ENCODE measurements at regions of chr4 and their contacts with region 1.

Region 1: DNA sequence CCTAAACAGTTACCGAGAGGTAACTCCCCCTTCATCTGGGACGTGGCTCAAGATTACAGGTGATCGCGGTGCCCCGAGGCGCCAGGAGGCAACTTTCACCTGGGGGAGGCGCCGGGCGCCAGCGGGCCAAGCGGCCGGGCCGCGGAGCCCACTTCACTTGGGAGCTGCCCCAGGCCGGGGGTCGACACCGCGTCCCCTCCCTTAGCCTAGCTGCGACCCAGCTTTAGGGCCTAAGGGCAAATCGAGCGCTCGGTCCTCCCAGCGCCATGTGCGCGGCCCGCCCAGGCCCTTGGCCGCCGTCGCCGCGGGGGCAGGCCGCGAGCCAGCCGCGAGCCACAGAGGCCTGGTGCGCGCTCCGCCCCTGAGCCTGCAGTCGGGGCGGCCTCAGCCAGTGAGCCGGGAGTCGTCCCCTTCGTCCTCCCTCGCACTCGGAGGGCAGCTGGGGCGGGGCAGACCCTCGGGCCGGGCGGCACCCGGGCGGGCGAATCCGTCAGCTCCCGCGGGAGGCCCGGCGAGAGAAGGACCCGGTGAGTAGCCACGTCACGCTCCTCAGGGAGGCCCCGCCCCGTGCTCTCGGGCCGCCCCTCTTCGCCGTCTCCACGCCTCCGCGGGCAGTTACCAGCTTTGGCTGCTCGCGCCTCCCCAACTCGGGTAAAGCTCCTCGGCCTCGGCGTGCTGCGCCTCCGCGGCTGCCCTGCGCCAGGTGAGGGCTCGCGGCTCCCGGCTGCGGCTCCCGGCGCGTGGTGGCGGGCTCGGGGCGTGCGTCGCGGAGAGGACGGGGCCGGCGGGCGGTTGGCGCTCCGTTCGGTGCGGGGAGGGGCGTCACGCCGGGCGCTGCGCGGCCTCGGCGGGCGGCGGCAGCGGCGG is at the start of gene LARP1B:
- DNase-seq: peak; percentile 95 to 98 (median 97)
- H3K4me3 ChIP-seq: peak within 1 kb of the TSS; percentile 58 to 94 (median 78)
- H3K27ac ChIP-seq: peak within 1 kb of the TSS; percentile 89 to 97
- H3K4me1 ChIP-seq: peaks cover 0 to 18% (median 8%) of the 10 kb centered on the region in 4 experiments
- H3K27me3 ChIP-seq: no peaks in the 10 kb centered on the region

Region 2: GRCh38 chr4:127965062-127965802 is 95.7 kb before region 1 on chr4 and contains the starts of genes ABHD18 and MFSD8:
- CTCF ChIA-PET with region 1: interaction called, 3 read pairs
- POLR2A ChIA-PET with region 1: interaction called, 22 read pairs
- DNase-seq: peak; percentile 99 to 100 (median 100)
- H3K4me3 ChIP-seq: peak within 1 kb of the TSS; percentile 77 to 100 (median 97)
- H3K27ac ChIP-seq: peak within 1 kb of the TSS; percentile 92 to 93
- H3K4me1 ChIP-seq: peaks cover 4 to 19% (median 7%) of the 10 kb centered on the region in 4 experiments
- H3K27me3 ChIP-seq: no peaks in the 10 kb centered on the region

Region 3: DNA sequence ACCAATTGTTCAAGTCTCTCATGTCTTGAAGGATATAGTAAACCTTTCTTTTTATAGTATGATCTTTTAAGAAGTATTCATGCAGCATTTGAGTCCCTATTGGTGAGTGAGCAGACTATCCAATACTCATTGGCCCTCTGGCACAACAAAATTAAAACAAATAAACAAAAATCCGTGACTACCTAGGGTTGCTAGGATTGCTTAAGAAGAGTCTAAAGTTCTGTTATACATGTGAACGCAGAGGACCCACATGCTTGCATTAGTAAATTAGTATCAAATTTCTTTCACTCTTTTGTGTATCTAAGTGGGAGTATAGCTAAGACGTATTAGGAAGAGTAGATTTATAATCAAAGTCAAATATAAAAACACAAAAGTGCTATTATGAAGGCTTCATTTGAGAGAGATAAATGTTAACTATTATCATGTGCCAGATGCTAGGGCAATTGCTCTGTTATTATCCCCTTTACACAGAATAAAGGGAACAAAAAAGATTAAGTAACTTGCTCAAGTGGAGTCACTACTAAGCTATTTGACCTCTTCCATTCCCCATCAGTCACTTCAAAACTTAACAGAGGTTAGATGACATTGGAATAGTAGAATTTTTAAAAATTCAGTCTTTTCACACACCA is 29.1 kb before region 1 on chr4:
- CTCF ChIA-PET with region 1: no interaction called
- POLR2A ChIA-PET with region 1: no interaction called
- DNase-seq: no peak
- H3K4me3 ChIP-seq: no peak overlapping the region
- H3K27ac ChIP-seq: no peak overlapping the region
- H3K4me1 ChIP-seq: no peaks in the 10 kb centered on the region
- H3K27me3 ChIP-seq: no peaks in the 10 kb centered on the region